ENCODE measurements at regions of chr16 and their contacts with region 1.

Region 1: GRCh38 chr16:29675811-29676643 is 3.0 kb upstream of the QPRT start:
- DNase-seq: no peak
- ATAC-seq: peak; percentile 70
- H3K4me3 Mint-ChIP-seq: no peak overlapping the region
- H3K27ac Mint-ChIP-seq: no peak overlapping the region
- H3K4me1 Mint-ChIP-seq: peaks cover 21% of the 10 kb centered on the region
- H3K27me3 Mint-ChIP-seq: no peaks in the 10 kb centered on the region

Region 2: DNA sequence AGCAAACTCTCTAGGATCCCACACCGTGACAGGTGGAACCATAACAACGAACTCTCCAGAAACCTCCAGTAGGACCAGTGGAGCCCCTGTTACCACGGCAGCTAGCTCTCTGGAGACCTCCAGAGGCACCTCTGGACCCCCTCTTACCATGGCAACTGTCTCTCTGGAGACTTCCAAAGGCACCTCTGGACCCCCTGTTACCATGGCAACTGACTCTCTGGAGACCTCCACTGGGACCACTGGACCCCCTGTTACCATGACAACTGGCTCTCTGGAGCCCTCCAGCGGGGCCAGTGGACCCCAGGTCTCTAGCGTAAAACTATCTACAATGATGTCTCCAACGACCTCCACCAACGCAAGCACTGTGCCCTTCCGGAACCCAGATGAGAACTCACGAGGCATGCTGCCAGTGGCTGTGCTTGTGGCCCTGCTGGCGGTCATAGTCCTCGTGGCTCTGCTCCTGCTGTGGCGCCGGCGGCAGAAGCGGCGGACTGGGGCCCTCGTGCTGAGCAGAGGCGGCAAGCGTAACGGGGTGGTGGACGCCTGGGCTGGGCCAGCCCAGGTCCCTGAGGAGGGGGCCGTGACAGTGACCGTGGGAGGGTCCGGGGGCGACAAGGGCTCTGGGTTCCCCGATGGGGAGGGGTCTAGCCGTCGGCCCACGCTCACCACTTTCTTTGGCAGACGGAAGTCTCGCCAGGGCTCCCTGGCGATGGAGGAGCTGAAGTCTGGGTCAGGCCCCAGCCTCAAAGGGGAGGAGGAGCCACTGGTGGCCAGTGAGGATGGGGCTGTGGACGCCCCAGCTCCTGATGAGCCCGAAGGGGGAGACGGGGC is 11.7 kb before region 1 on chr16:
- CTCF ChIA-PET with region 1: interaction called, 10 read pairs
- POLR2A ChIA-PET with region 1: interaction called, 6 read pairs
- intact Hi-C with region 1: no loop called
- DNase-seq: peak; percentile 77
- ATAC-seq: peak; percentile 31
- H3K4me3 Mint-ChIP-seq: peak overlapping the region; percentile 99
- H3K27ac Mint-ChIP-seq: peak overlapping the region; percentile 97
- H3K4me1 Mint-ChIP-seq: peaks cover 51% of the 10 kb centered on the region
- H3K27me3 Mint-ChIP-seq: no peaks in the 10 kb centered on the region

Measured in activated CD4-positive, alpha-beta T cell treated with anti-CD3 and anti-CD28 coated beads for 36 hours (primary cell).